AG04449 (cell line): ENCODE measurements at regions of chr10 and their contacts with region 1.

Region 1: DNA sequence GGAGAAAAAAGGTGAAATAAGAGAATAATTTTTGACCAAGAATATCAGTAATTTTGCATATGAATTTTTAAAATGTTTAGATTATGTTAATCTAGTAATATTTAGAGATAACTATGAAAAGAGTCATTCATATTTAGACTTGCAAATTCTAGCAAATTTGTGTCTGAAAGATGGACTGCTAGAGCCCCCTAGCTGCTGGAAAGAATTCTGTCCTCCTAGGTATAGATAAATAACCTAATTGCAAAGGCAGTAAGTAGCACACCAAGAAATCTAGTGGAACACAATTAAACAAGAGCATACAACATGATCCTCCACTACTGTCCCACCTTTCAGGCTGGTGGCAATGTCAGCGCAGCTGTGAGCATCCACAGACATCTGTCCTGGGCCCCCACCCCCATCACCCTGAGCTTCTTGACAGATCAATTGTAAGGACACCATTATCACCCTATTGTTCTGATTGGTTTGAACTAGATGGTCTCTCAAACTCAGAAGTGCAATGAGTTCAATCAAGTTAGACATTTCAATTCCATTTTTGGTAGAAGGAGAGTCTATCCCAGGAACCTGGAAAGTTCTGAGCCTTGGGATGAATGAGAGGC is 15.0 kb upstream of the GFRA1 start:
- DNase-seq: no peak
- H3K4me3 ChIP-seq: no peak overlapping the region
- CTCF ChIP-seq: peak; percentile 44

Region 2: GRCh38 chr10:115706026-115706781 is 581.8 kb before region 1 on chr10:
- CTCF ChIA-PET with region 1: interaction called, 119 read pairs
- POLR2A ChIA-PET with region 1: no interaction called
- DNase-seq: no peak
- H3K4me3 ChIP-seq: no peak overlapping the region
- CTCF ChIP-seq: peak; percentile 35

Region 3: GRCh38 chr10:115829521-115830205 is 458.3 kb before region 1 on chr10:
- CTCF ChIA-PET with region 1: interaction called, 45 read pairs
- POLR2A ChIA-PET with region 1: no interaction called
- DNase-seq: peak; percentile 55
- H3K4me3 ChIP-seq: no peak overlapping the region
- CTCF ChIP-seq: peak; percentile 27

Region 4: GRCh38 chr10:116276981-116277380 is 11.0 kb before region 1 on chr10:
- CTCF ChIA-PET with region 1: interaction called, 12 read pairs
- POLR2A ChIA-PET with region 1: no interaction called
- DNase-seq: no peak
- H3K4me3 ChIP-seq: no peak overlapping the region
- CTCF ChIP-seq: no peak

Region 5: DNA sequence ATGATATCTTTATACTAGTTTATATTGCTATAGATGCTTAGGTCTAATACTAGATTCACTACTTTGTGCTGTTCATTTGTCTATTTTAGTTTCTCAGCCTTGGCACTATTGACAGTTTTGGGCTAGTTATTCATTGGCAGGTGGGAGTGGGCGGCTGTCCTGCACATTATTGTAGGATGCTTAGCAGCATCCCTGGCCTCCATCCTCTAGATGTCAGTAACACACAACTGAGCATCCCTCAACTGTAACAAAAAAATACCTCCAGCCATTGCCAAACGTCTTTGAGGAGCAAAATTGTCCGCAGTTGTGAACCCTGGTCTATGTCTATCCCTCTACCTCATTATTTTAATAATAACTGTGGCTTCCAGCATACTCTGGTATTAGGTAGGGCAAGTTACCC is 223.4 kb after region 1 on chr10:
- CTCF ChIA-PET with region 1: no interaction called
- POLR2A ChIA-PET with region 1: no interaction called
- DNase-seq: no peak
- H3K4me3 ChIP-seq: no peak overlapping the region
- CTCF ChIP-seq: no peak